Endothelial cell of umbilical vein (primary cell): ENCODE measurements at regions of chr1 and their contacts with region 1.

Region 1: GRCh38 chr1:1059494-1060280 is 14.4 kb downstream of the RNF223 start:
- DNase-seq: peak; percentile 70
- H3K4me3 ChIP-seq: peak overlapping the region; percentile 35 to 51 (median 43)
- H3K27ac ChIP-seq: no peak overlapping the region
- H3K4me1 ChIP-seq: peaks cover 16% of the 10 kb centered on the region
- H3K27me3 ChIP-seq: peaks cover 0 to 10% of the 10 kb centered on the region in 2 experiments
- CTCF ChIP-seq: no peak
- POLR2A ChIP-seq: no peak

Region 2: DNA sequence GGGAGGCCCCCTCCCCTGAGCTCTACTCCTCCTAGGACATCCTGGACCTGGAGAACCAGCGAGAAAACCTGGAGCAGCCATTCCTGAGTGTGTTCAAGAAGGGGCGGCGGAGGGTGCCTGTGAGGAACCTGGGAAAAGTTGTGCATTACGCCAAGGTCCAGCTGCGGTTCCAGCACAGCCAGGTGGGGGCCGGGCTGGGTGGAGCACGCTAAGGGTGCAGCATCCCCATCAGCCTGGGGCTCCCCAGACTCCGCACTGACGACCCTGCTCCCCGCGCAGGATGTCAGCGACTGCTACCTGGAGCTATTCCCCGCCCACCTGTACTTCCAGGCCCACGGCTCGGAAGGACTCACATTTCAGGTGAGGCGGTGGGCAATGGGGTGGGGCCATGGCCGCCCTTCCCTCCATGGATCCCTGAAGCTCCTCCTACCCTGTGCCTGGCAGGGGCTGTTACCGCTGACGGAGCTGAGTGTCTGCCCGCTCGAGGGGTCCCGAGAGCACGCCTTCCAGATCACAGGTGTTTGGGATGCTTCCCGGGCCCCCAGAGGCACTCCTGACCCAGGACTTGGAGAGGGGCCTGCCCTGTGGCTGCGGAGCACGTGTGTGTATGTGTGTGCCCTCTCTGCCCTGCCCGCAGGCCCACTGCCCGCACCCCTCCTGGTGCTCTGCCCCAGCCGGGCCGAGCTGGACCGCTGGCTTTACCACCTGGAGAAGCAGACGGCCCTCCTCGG is 89.3 kb before region 1 on chr1:
- CTCF ChIA-PET with region 1: no interaction called
- POLR2A ChIA-PET with region 1: no interaction called
- dilution Hi-C with region 1: no loop called
- intact Hi-C with region 1: no loop called
- DNase-seq: no peak
- H3K4me3 ChIP-seq: no peak overlapping the region
- H3K27ac ChIP-seq: no peak overlapping the region
- H3K4me1 ChIP-seq: peaks cover 11% of the 10 kb centered on the region
- H3K27me3 ChIP-seq: peaks cover 2% of the 10 kb centered on the region in 2 experiments
- CTCF ChIP-seq: no peak
- POLR2A ChIP-seq: no peak

Region 3: GRCh38 chr1:999725-1000356 is 59.8 kb before region 1 on chr1 and contains the start of gene HES4:
- CTCF ChIA-PET with region 1: interaction called, 7 read pairs
- POLR2A ChIA-PET with region 1: no interaction called
- dilution Hi-C with region 1: no loop called
- intact Hi-C with region 1: loop called (anchors 1 kb)
- DNase-seq: peak; percentile 92
- H3K4me3 ChIP-seq: peak within 1 kb of the TSS; percentile 47 to 55 (median 51)
- H3K27ac ChIP-seq: peak within 1 kb of the TSS; percentile 80
- H3K4me1 ChIP-seq: peaks cover 13% of the 10 kb centered on the region
- H3K27me3 ChIP-seq: peaks cover 0 to 19% of the 10 kb centered on the region in 2 experiments
- CTCF ChIP-seq: no peak
- POLR2A ChIP-seq: peak; percentile 69
- total RNA-seq, gene HES4: 32.0 and 37.6 TPM in 2 replicates

Region 4: GRCh38 chr1:1013105-1013921 is 46.4 kb before region 1 on chr1 and contains the start of gene ISG15:
- CTCF ChIA-PET with region 1: interaction called, 10 read pairs
- POLR2A ChIA-PET with region 1: no interaction called
- dilution Hi-C with region 1: no loop called
- intact Hi-C with region 1: no loop called
- DNase-seq: peak; percentile 89
- H3K4me3 ChIP-seq: peak within 1 kb of the TSS; percentile 41 to 83 (median 81)
- H3K27ac ChIP-seq: peak within 1 kb of the TSS; percentile 54
- H3K4me1 ChIP-seq: peaks cover 10% of the 10 kb centered on the region
- H3K27me3 ChIP-seq: no peaks in the 10 kb centered on the region
- CTCF ChIP-seq: no peak
- POLR2A ChIP-seq: peak; percentile 61
- total RNA-seq, gene ISG15: 44.6 and 47.6 TPM in 2 replicates

Region 5: GRCh38 chr1:1033009-1033587 is 26.6 kb before region 1 on chr1:
- CTCF ChIA-PET with region 1: interaction called, 4 read pairs
- POLR2A ChIA-PET with region 1: no interaction called
- dilution Hi-C with region 1: no loop called
- intact Hi-C with region 1: loop called (anchors 2 kb)
- DNase-seq: peak; percentile 80
- H3K4me3 ChIP-seq: peak overlapping the region in 1 of 3 experiments; percentile 20
- H3K27ac ChIP-seq: no peak overlapping the region
- H3K4me1 ChIP-seq: no peaks in the 10 kb centered on the region
- H3K27me3 ChIP-seq: no peaks in the 10 kb centered on the region
- CTCF ChIP-seq: peak; percentile 76 to 90
- POLR2A ChIP-seq: no peak